ENCODE measurements at regions of chr2 and their contacts with region 1.

Region 1: GRCh38 chr2:136131961-136132824 is 14.2 kb upstream of the CXCR4 start:
- DNase-seq: peak; percentile 91
- H3K4me3 Mint-ChIP-seq: peak overlapping the region; percentile 76
- H3K27ac Mint-ChIP-seq: peak overlapping the region; percentile 81
- H3K4me1 Mint-ChIP-seq: peaks cover 88% of the 10 kb centered on the region
- H3K27me3 Mint-ChIP-seq: peaks cover 23% of the 10 kb centered on the region

Region 2: DNA sequence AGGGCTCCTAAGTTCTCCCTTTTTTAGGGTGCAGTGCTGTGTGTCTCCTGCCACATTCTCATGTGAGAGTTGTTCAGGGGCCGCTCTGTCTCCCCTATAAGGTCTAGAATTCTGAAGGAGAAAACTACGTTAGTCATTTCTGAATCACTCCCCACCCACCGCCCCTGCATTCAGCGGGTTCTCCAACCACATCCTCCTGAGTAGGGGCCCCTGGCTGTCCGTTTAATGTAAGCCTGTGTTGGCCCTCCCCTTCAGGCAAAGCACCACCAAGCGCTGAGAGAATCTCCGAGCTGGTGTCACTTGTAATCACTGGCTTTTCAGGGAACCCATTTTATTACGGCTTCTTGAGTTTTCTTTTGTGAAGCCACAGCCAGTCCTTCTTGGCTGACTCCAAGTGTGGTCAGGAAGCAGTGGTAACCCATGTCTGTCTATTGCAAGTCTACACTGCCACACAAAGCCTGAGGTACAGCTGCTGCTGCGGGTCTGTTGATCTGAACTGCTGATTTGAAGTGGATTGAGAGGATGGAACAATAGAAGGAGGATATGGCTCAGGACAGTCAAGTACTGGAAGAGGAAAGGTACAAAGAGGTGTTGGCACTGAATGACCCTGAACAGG is 312.1 kb before region 1 on chr2:
- intact Hi-C with region 1: loop called (anchors 5 kb)
- DNase-seq: peak; percentile 93
- H3K4me3 Mint-ChIP-seq: peak overlapping the region; percentile 74
- H3K27ac Mint-ChIP-seq: peak overlapping the region; percentile 83
- H3K4me1 Mint-ChIP-seq: peaks cover 44% of the 10 kb centered on the region
- H3K27me3 Mint-ChIP-seq: no peaks in the 10 kb centered on the region

Region 3: DNA sequence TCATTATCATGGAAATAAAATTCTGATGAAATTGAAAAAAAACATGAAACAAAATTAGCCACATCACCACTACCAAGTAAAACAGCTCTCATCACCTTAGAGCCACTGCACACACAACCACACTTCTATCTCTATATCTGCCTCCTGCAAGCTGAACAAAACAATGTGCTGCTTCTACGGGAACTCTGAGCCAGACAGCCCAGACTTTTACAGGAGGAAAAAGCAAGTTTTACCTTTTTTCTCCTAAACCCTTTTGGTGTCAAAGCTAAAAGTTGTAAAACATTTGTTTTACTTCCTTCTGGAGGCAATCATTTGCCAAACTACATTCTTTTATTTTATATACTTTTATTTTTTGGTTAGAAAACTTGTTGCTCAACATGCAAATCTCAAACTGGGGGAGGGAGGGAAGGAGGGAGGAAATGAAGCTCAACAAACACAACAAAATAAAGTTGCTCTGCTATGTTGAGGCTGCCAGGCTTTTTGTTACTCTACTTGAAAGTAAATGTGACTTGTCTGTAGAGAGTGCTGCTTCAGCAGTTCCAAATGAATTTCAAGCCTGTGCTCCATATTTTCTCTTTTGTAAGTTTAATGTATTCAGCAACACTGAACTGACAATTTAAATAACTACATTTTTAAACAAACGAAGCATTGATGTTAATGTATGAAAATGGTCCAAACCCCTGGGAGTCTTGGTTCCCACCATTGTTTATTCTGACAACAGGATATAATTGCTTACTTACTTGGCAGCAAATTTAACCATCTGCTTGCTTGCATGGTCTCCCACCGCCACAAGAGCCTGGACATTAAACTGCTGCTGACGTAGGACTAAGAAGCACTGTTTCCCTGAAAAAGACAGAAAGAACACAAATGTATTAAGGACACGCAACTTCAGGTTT is 171.3 kb before region 1 on chr2:
- intact Hi-C with region 1: loop called (anchors 2 kb)
- DNase-seq: peak; percentile 83
- H3K4me3 Mint-ChIP-seq: peak overlapping the region; percentile 58
- H3K27ac Mint-ChIP-seq: peak overlapping the region; percentile 94
- H3K4me1 Mint-ChIP-seq: peaks cover 56% of the 10 kb centered on the region
- H3K27me3 Mint-ChIP-seq: no peaks in the 10 kb centered on the region

Region 4: GRCh38 chr2:136207030-136207623 is 74.9 kb after region 1 on chr2:
- intact Hi-C with region 1: loop called (anchors 2 kb)
- DNase-seq: peak; percentile 60
- H3K4me3 Mint-ChIP-seq: peak overlapping the region; percentile 8
- H3K27ac Mint-ChIP-seq: peak overlapping the region; percentile 92
- H3K4me1 Mint-ChIP-seq: peaks cover 23% of the 10 kb centered on the region
- H3K27me3 Mint-ChIP-seq: peaks cover 4% of the 10 kb centered on the region

Region 5: GRCh38 chr2:136238286-136239078 is 106.3 kb after region 1 on chr2:
- intact Hi-C with region 1: loop called (anchors 1 kb)
- DNase-seq: peak; percentile 81
- H3K4me3 Mint-ChIP-seq: peak overlapping the region; percentile 43
- H3K27ac Mint-ChIP-seq: peak overlapping the region; percentile 89
- H3K4me1 Mint-ChIP-seq: peaks cover 45% of the 10 kb centered on the region
- H3K27me3 Mint-ChIP-seq: no peaks in the 10 kb centered on the region

Region 6: DNA sequence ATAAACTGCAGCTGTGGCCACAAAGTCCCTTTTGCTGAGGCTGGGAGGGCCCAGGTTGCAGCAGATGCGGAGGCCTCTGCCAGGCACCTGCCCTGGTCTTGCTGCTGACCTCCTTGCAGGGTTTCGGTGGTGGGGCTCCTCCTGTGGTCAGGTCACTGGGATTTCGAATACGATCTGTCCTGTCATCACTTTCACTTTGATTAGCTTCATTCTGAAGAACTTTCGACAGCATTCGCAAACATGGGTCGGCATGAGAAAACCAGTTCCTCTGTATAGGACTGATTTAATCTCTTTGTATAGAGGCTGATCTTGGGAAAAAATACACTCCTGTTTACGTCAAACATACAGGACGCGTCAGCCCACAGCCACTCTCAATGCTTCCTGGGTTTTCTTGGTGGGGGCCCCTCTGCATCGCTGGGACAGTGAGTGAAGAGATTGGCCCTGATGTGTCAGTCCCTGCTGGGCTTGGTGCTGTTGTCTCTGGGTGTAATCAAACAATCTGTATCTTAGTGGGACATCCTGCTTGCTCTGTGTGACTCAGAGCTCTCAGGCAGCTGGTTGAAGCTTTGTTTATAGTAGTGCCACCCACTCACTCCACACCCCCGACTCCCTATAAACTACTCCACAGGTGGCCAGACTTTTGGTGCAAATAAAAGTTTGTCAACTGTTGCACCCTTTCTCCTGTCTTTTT is 195.1 kb after region 1 on chr2:
- intact Hi-C with region 1: loop called (anchors 1 kb)
- DNase-seq: peak; percentile 91
- H3K4me3 Mint-ChIP-seq: peak overlapping the region; percentile 74
- H3K27ac Mint-ChIP-seq: peak overlapping the region; percentile 92
- H3K4me1 Mint-ChIP-seq: peaks cover 49% of the 10 kb centered on the region
- H3K27me3 Mint-ChIP-seq: no peaks in the 10 kb centered on the region

Region 7: GRCh38 chr2:136378712-136379595 is 246.8 kb after region 1 on chr2:
- intact Hi-C with region 1: loop called (anchors 1 kb)
- DNase-seq: peak; percentile 93
- H3K4me3 Mint-ChIP-seq: no peak overlapping the region
- H3K27ac Mint-ChIP-seq: no peak overlapping the region
- H3K4me1 Mint-ChIP-seq: peaks cover 86% of the 10 kb centered on the region
- H3K27me3 Mint-ChIP-seq: no peaks in the 10 kb centered on the region